Activated naive CD4-positive, alpha-beta T cell treated with anti-CD3 and anti-CD28 coated beads for 36 hours (primary cell): ENCODE measurements at regions of chr1 and their contacts with region 1.

Region 1: GRCh38 chr1:246450611-246451251 is 56.3 kb downstream of the SMYD3 start:
- DNase-seq: no peak
- H3K4me3 Mint-ChIP-seq: no peak overlapping the region
- H3K27ac Mint-ChIP-seq: no peak overlapping the region
- H3K4me1 Mint-ChIP-seq: peaks cover 3% of the 10 kb centered on the region
- H3K27me3 Mint-ChIP-seq: no peaks in the 10 kb centered on the region

Region 2: GRCh38 chr1:246117066-246117791 is 333.5 kb before region 1 on chr1:
- CTCF ChIA-PET with region 1: interaction called, 3 read pairs
- intact Hi-C with region 1: loop called (anchors 5 kb)
- DNase-seq: peak; percentile 45
- H3K4me3 Mint-ChIP-seq: peak overlapping the region; percentile 3
- H3K27ac Mint-ChIP-seq: peak overlapping the region; percentile 42
- H3K4me1 Mint-ChIP-seq: peaks cover 19% of the 10 kb centered on the region
- H3K27me3 Mint-ChIP-seq: no peaks in the 10 kb centered on the region